CD8-positive, alpha-beta T cell (primary cell): ENCODE measurements at regions of chr6 and their contacts with region 1.

Region 1: DNA sequence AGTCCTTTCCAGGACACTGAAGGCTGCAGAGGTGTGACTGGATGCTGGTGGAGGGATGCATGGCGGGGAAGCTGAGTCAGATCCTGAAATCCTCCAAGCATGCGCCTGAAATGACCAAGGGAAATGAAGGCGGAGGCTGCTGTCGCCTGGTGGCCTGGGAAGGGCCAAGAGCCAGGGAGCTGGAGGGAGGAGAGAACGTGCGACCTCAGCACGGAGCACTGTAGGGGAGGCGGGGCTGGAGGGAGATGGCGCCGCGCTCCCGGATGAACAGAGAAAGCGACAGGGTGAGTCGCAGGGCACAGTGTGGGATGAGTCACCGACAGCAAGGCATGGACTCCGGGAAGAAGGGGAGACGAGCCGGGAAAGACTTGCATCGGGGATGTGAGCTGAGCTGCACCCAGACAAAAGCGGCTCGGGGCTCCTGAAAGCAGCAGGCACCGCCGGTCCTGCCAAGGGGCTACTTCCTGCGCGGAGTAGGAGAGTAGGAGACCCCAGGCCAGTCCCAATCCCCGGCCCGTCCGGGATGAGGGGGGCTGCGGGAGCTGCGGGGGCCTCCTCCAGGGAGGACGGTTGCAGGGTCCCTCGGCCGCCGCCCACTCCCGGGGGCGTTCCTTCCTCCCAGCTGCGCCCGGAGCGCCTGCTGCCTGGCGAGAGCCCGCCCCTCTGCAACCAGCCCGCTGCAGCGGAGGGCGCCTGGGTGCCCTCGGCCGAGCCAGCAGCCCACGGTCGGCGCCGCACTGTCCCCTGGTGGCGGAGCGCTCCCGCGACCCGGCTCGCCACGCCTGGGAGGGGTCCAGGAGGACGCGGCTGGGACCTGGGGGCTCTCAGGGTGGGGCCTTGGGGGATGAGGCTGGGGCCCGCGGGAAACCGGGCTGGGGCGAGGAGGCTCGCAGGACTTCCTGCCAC is 11.0 kb upstream of the NQO2 start:
- DNase-seq: peak; percentile 65 to 91 (median 75)
- ATAC-seq: peak; percentile 64
- H3K4me3 ChIP-seq: peak overlapping the region; percentile 65 to 94
- H3K4me3 Mint-ChIP-seq: peak overlapping the region; percentile 96
- H3K27ac ChIP-seq: peak overlapping the region; percentile 97 to 98
- H3K27ac Mint-ChIP-seq: peak overlapping the region; percentile 99
- H3K4me1 ChIP-seq: peaks cover 8% of the 10 kb centered on the region
- H3K4me1 Mint-ChIP-seq: peaks cover 27% of the 10 kb centered on the region
- H3K27me3 ChIP-seq: no peaks in the 10 kb centered on the region
- H3K27me3 Mint-ChIP-seq: no peaks in the 10 kb centered on the region
- CTCF ChIP-seq: peak; percentile 68

Region 2: DNA sequence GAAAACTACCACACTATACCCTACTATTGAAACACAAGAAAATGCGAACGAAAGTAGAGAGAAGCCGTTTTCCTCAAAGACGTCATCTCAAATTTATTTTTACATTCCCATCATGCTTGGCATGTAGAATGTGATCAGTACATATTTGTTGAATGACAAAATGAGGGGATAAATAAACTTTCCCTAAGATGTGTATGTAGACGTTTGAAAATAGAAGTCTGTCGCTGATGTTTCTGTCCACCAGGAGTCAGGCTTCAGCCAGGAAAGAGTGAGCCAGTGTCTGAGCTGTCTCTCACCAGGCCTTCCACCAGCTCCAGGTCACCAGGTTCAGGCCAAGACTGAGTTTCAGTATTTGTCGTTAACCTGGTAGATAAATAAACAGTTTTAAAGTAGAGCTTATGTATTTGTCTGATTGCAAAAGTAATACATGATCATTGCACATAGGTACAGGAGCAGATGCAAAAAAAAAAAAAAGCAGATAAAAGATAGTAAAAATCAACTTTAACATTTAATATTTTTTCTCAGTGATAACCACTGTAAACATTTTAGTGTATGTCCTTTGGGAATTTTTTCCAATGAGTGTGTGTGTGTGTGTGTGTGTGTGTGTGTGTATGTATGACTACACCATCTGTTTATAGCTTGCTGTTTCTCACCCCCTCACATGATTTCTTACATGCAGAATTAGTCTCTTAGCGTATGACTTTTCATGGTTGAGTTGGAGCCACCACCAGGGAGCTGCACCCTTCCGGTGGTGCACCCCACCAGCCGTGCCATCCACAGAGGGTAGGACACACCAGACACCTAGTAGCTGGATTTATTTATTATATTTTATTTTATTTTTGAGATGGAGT is 197.3 kb before region 1 on chr6:
- CTCF ChIA-PET with region 1: interaction called, 19 read pairs
- POLR2A ChIA-PET with region 1: interaction called, 8 read pairs
- intact Hi-C with region 1: loop called (anchors 1 to 2 kb)
- DNase-seq: peak in 8 of 9 experiments; percentile 21 to 75 (median 47)
- ATAC-seq: peak; percentile 79
- H3K4me3 ChIP-seq: no peak overlapping the region
- H3K4me3 Mint-ChIP-seq: peak overlapping the region; percentile 13
- H3K27ac ChIP-seq: peak overlapping the region in 1 of 2 experiments; percentile 10
- H3K27ac Mint-ChIP-seq: peak overlapping the region; percentile 77
- H3K4me1 ChIP-seq: peaks cover 33% of the 10 kb centered on the region
- H3K4me1 Mint-ChIP-seq: peaks cover 32% of the 10 kb centered on the region
- H3K27me3 ChIP-seq: no peaks in the 10 kb centered on the region
- H3K27me3 Mint-ChIP-seq: no peaks in the 10 kb centered on the region
- CTCF ChIP-seq: peak; percentile 73

Region 3: GRCh38 chr6:2876210-2877056 is 112.2 kb before region 1 on chr6:
- CTCF ChIA-PET with region 1: interaction called, 11 read pairs
- POLR2A ChIA-PET with region 1: no interaction called
- intact Hi-C with region 1: no loop called
- DNase-seq: peak in 3 of 9 experiments; percentile 38 to 67 (median 57)
- ATAC-seq: peak; percentile 9
- H3K4me3 ChIP-seq: peak overlapping the region; percentile 33 to 65
- H3K4me3 Mint-ChIP-seq: peak overlapping the region; percentile 87
- H3K27ac ChIP-seq: peak overlapping the region; percentile 24 to 77
- H3K27ac Mint-ChIP-seq: peak overlapping the region; percentile 93
- H3K4me1 ChIP-seq: peaks cover 68% of the 10 kb centered on the region
- H3K4me1 Mint-ChIP-seq: peaks cover 78% of the 10 kb centered on the region
- H3K27me3 ChIP-seq: no peaks in the 10 kb centered on the region
- H3K27me3 Mint-ChIP-seq: no peaks in the 10 kb centered on the region
- CTCF ChIP-seq: no peak

Region 4: GRCh38 chr6:2911171-2911570 is 77.5 kb before region 1 on chr6:
- CTCF ChIA-PET with region 1: interaction called, 12 read pairs
- POLR2A ChIA-PET with region 1: interaction called, 7 read pairs
- intact Hi-C with region 1: no loop called
- DNase-seq: no peak
- ATAC-seq: no peak
- H3K4me3 ChIP-seq: no peak overlapping the region
- H3K4me3 Mint-ChIP-seq: no peak overlapping the region
- H3K27ac ChIP-seq: no peak overlapping the region
- H3K27ac Mint-ChIP-seq: no peak overlapping the region
- H3K4me1 ChIP-seq: no peaks in the 10 kb centered on the region
- H3K4me1 Mint-ChIP-seq: peaks cover 33% of the 10 kb centered on the region
- H3K27me3 ChIP-seq: no peaks in the 10 kb centered on the region
- H3K27me3 Mint-ChIP-seq: no peaks in the 10 kb centered on the region
- CTCF ChIP-seq: no peak

Region 5: DNA sequence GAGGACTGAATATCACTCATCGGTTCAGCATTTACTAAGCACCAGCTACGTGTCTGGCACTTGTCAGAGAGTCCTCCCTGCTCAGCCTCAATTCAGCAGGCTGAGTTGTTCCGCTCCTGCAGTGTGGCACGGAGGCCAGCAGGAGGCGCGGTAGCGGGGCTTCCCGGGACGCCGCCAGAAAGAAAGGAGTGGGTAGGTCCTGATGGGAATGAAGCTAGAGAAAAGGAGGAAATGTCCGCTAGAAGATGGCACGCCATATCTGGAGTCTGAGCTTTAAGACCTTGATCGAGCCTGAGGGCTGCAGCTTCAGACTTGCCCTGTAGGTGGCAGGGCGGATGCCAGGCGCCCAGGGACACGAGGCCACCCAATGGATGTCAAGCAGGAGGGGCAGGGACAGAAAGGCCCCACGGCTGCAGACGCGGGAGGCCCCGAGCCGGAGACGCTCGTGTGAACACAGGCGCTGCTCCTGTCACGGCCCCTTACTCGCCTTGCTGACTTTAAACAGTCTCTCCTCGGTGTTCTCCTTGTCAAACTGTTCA is 36.1 kb before region 1 on chr6:
- CTCF ChIA-PET with region 1: interaction called, 33 read pairs
- POLR2A ChIA-PET with region 1: interaction called, 12 read pairs
- intact Hi-C with region 1: loop called (anchors 1 kb)
- DNase-seq: peak in 8 of 9 experiments; percentile 44 to 81 (median 64)
- ATAC-seq: peak; percentile 94
- H3K4me3 ChIP-seq: peak overlapping the region in 1 of 2 experiments; percentile 18
- H3K4me3 Mint-ChIP-seq: peak overlapping the region; percentile 62
- H3K27ac ChIP-seq: no peak overlapping the region
- H3K27ac Mint-ChIP-seq: peak overlapping the region; percentile 67
- H3K4me1 ChIP-seq: peaks cover 13% of the 10 kb centered on the region
- H3K4me1 Mint-ChIP-seq: peaks cover 21% of the 10 kb centered on the region
- H3K27me3 ChIP-seq: no peaks in the 10 kb centered on the region
- H3K27me3 Mint-ChIP-seq: no peaks in the 10 kb centered on the region
- CTCF ChIP-seq: peak; percentile 85

Region 6: DNA sequence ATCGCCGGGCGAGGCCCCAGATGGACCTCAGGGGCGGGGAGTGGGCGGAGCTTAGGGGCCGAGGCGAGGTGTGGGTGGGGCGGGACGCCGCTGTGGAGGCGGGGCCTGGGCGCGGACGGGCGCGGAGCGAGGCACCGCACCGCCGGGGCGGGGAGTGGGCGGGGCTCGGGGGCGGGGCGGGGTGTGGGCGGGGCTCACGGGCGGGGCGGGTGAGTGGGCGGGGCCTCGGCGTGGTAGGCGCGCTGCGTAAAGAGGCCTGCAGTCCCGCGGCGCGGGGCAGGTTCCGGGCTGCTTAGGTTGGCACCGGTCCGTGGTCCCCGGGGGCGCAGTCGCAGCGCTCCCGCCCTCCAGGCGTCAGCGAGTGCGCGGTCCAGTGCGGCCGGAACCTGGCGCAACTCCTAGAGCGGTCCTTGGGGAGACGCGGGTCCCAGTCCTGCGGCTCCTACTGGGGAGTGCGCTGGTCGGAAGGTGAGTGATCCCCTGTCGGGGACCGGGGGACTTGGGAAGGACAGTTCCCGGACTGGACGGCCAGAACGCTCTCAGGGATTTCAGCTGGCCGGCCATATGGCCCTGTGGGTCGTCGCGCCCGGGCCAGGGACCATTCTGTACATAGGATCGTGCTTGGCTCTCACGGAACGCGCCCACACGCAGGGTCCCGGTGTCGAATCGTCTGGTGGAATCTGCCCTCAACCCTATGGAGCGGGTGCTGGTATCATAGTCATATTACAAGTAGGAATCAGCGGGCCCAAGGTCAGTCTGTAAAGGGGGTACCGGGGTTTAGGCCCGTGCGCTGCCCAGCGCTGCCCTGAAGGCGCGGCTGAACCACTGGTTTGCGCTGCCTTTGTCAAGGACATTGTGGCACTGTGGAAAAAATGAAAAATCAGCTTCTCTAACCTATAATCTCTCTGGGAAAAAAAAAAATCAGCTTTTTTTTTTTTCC is 11.2 kb after region 1 on chr6 and contains the start of gene NQO2:
- CTCF ChIA-PET with region 1: interaction called, 11 read pairs
- POLR2A ChIA-PET with region 1: interaction called, 30 read pairs
- intact Hi-C with region 1: loop called in 1 of 2 experiments (anchors 1 kb)
- DNase-seq: peak; percentile 83 to 96 (median 91)
- ATAC-seq: peak; percentile 72
- H3K4me3 ChIP-seq: peak within 1 kb of the TSS; percentile 83 to 98
- H3K4me3 Mint-ChIP-seq: peak within 1 kb of the TSS; percentile 91
- H3K27ac ChIP-seq: peak within 1 kb of the TSS; percentile 70 to 75
- H3K27ac Mint-ChIP-seq: peak within 1 kb of the TSS; percentile 92
- H3K4me1 ChIP-seq: peaks cover 13% of the 10 kb centered on the region
- H3K4me1 Mint-ChIP-seq: peaks cover 15% of the 10 kb centered on the region
- H3K27me3 ChIP-seq: no peaks in the 10 kb centered on the region
- H3K27me3 Mint-ChIP-seq: no peaks in the 10 kb centered on the region
- CTCF ChIP-seq: no peak
- total RNA-seq, gene NQO2: 3.8 to 5.5 TPM

Region 7: DNA sequence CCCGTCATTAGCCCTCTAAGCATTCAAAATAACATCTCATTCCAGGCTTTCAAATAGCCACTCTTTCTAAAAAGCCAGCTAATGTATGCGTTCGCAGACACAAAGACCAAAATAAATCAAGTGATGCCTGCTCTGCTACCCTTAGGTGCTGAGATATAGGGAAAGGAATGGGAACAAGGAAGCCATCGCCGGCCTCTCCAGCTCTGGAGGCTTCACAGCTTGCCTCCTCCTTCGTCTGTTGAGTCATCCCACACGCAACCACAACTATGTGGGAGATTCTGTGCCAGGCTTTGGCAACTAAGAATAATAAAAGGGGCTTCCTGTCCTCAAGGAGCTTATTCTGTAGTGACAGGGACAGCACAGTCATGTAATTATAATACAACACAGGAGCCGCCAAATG is 495.5 kb after region 1 on chr6:
- CTCF ChIA-PET with region 1: no interaction called
- POLR2A ChIA-PET with region 1: no interaction called
- intact Hi-C with region 1: no loop called
- DNase-seq: no peak
- ATAC-seq: no peak
- H3K4me3 ChIP-seq: no peak overlapping the region
- H3K4me3 Mint-ChIP-seq: no peak overlapping the region
- H3K27ac ChIP-seq: no peak overlapping the region
- H3K27ac Mint-ChIP-seq: no peak overlapping the region
- H3K4me1 ChIP-seq: no peaks in the 10 kb centered on the region
- H3K4me1 Mint-ChIP-seq: no peaks in the 10 kb centered on the region
- H3K27me3 ChIP-seq: peaks cover 0 to 5% of the 10 kb centered on the region in 2 experiments
- H3K27me3 Mint-ChIP-seq: peaks cover 34% of the 10 kb centered on the region
- CTCF ChIP-seq: no peak

Region 8: GRCh38 chr6:3732345-3733141 is 743.9 kb after region 1 on chr6:
- CTCF ChIA-PET with region 1: no interaction called
- POLR2A ChIA-PET with region 1: no interaction called
- intact Hi-C with region 1: loop called in 1 of 2 experiments (anchors 10 kb)
- DNase-seq: peak; percentile 29 to 83 (median 68)
- ATAC-seq: peak; percentile 76
- H3K4me3 ChIP-seq: no peak overlapping the region
- H3K4me3 Mint-ChIP-seq: no peak overlapping the region
- H3K27ac ChIP-seq: no peak overlapping the region
- H3K27ac Mint-ChIP-seq: no peak overlapping the region
- H3K4me1 ChIP-seq: no peaks in the 10 kb centered on the region
- H3K4me1 Mint-ChIP-seq: peaks cover 2% of the 10 kb centered on the region
- H3K27me3 ChIP-seq: no peaks in the 10 kb centered on the region
- H3K27me3 Mint-ChIP-seq: peaks cover 11% of the 10 kb centered on the region
- CTCF ChIP-seq: peak; percentile 66